Sigmoid colon (tissue), 7 donors: ENCODE measurements at regions of chr19 and their contacts with region 1.

Region 1: DNA sequence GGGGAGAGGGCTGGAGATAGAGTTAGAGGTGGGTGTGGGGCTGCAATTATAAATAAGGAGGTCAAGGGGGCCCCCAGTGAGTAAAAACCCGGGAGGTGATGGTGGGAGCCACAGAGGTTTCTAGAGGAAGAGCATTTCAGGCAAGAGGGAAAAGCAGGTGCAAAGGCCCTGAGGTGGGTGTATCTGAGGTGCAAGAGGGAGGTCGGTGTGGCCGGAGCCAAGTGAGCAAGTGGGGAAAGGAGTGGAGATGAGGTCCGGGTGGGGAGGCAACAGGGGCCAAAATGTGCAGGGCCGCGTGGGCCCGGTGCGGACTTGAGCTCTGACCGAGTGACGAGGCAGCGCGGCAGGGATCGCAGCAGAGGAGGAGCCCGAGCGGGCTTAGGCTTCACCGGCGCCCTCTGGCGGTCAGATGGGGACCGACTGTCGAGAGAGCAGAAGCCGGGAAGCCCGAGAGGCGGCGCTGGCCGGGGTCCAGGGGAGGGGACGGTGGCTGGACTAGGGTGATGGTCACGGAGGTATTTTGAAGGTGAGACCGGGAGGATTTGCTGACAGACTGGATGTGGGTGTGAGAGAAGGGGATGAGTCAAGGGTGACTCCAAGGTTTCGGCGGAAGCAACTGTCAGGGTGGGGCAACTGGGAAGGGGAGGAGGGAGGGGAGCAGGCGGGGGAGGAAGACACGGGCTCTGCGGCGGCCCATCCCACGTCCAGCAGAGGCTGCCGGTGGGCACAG is 17.7 kb upstream of the SPACA4 start:
- DNase-seq: peak; percentile 94
- H3K4me3 ChIP-seq: peak overlapping the region; percentile 28 to 49 (median 44)
- H3K27ac ChIP-seq: peak overlapping the region in 3 of 4 donors; percentile 33 to 48 (median 44)
- H3K4me1 ChIP-seq: peaks cover 0 to 21% (median 8%) of the 10 kb centered on the region in 4 donors
- H3K27me3 ChIP-seq: no peaks in the 10 kb centered on the region
- CTCF ChIP-seq: peak; percentile 93 to 96 (median 94)
- EP300 ChIP-seq: no peak
- POLR2A ChIP-seq: no peak

Region 2: DNA sequence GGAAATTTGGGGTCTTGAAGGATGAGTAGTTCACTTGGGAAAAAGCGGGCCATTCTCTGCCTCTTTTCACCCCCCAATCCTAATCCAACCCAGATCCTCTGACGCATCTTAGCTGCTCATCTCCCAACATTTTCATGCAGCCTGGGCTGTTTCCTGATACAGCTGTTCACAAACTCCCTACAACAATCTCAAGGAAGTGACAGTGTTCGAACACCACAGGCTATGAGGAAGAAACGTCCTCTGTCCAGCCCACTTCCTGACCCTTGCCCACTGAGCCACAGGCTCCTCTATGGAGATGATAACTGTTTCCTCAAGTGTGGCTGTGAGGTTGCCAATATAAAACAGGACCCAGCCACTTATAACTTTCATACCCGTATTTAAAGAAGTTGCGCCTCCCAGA is 93.4 kb before region 1 on chr19:
- intact Hi-C with region 1: no loop called
- DNase-seq: no peak
- H3K4me3 ChIP-seq: no peak overlapping the region
- H3K27ac ChIP-seq: no peak overlapping the region
- H3K4me1 ChIP-seq: peaks cover 0 to 39% (median 37%) of the 10 kb centered on the region in 4 donors
- H3K27me3 ChIP-seq: peaks cover 28 to 66% (median 40%) of the 10 kb centered on the region in 3 donors
- CTCF ChIP-seq: no peak
- EP300 ChIP-seq: no peak
- POLR2A ChIP-seq: no peak

Region 3: DNA sequence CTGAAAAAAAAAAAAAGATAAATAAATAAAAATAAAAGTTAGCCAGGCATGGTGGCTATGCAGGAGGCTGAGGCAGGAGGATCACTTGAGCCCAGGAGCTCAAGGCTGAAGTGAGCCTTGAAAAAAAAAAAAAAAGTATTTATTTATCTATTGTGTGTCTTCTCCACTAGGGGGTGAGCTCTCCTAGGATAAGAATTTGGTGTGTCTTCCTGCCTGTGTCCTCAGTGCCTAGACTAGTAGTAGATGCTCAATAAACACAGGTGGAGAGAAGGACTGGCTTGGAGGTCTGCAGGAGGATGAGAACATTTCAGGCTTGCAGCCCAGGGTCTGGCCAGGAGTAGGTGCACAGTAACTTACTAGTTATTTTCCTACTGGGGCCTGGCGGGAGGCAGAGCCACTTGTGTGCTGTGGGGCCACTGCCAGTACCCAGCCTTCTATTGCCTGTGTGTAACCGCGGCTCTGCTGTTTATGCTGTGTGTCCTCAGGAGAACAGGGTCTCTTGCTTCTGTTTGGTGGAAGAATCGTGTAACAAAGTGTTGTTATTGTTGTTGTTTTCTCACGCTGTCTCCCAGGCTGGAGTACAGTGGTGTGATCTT is 82.6 kb before region 1 on chr19:
- intact Hi-C with region 1: loop called (anchors 2 kb)
- DNase-seq: no peak
- H3K4me3 ChIP-seq: no peak overlapping the region
- H3K27ac ChIP-seq: no peak overlapping the region
- H3K4me1 ChIP-seq: peaks cover 0 to 13% (median 8%) of the 10 kb centered on the region in 4 donors
- H3K27me3 ChIP-seq: peaks cover 10 to 29% (median 25%) of the 10 kb centered on the region in 3 donors
- CTCF ChIP-seq: peak; percentile 22 to 53 (median 38)
- EP300 ChIP-seq: no peak
- POLR2A ChIP-seq: no peak

Region 4: GRCh38 chr19:48558018-48558684 is 30.7 kb before region 1 on chr19:
- intact Hi-C with region 1: no loop called
- DNase-seq: no peak
- H3K4me3 ChIP-seq: peak overlapping the region in 1 of 4 donors; percentile 15
- H3K27ac ChIP-seq: no peak overlapping the region
- H3K4me1 ChIP-seq: peaks cover 0 to 5% (median 0%) of the 10 kb centered on the region in 4 donors
- H3K27me3 ChIP-seq: peaks cover 0 to 13% (median 0%) of the 10 kb centered on the region in 3 donors
- CTCF ChIP-seq: no peak
- EP300 ChIP-seq: no peak
- POLR2A ChIP-seq: no peak

Region 5: DNA sequence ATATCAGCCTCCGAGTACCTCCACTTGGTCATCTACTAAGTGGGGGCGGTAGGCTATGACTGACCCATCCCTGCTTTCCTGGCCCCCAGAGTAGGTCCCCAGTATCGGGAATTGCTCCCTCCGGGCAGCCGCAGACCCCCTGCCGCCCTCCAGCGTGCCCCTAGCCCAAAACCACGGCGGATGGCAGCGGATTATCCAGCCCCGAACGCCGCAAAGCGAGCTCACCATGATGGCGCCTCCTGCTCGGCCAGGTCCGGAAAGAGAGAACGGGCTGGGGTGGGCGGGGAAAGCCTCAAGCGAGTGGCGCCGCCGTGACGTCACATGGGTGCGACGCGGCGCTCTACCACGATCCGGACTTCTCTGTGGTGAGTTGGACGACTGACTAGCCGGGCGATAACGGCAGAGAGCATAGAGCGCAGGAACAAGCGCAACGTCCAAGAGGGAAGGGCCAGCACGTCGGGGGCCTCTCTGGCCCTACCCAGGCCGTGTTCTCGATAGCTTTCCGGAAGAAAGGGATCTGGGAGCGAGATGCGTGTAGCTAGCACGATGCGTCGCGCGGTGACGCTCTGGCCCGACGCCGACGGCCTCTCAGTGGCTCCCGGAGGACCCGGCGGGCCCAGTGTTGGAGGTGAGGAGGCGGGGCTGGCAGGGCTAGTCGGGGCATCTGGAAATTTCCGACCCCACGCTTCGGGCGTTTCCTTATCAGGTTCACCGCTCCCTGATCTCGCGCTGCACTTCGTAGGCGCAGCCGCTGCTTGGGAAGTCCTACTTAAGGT is 30.3 kb after region 1 on chr19 and contains the starts of genes RPL18 and SPHK2:
- intact Hi-C with region 1: loop called (anchors 1 kb)
- DNase-seq: peak; percentile 100
- H3K4me3 ChIP-seq: peak within 1 kb of the TSS; percentile 56 to 73 (median 64)
- H3K27ac ChIP-seq: peak within 1 kb of the TSS; percentile 91 to 95 (median 94)
- H3K4me1 ChIP-seq: peaks cover 0 to 61% (median 45%) of the 10 kb centered on the region in 4 donors
- H3K27me3 ChIP-seq: no peaks in the 10 kb centered on the region
- CTCF ChIP-seq: no peak
- EP300 ChIP-seq: peak in 1 of 4 donors; percentile 74
- POLR2A ChIP-seq: peak; percentile 90 to 94
- total RNA-seq, gene RPL18: 2,699 to 3,791 (median 2,810) TPM
- total RNA-seq, gene SPHK2: 10.0 to 16.9 (median 12.8) TPM